ENCODE measurements at regions of chr22 and their contacts with region 1.

Region 1: DNA sequence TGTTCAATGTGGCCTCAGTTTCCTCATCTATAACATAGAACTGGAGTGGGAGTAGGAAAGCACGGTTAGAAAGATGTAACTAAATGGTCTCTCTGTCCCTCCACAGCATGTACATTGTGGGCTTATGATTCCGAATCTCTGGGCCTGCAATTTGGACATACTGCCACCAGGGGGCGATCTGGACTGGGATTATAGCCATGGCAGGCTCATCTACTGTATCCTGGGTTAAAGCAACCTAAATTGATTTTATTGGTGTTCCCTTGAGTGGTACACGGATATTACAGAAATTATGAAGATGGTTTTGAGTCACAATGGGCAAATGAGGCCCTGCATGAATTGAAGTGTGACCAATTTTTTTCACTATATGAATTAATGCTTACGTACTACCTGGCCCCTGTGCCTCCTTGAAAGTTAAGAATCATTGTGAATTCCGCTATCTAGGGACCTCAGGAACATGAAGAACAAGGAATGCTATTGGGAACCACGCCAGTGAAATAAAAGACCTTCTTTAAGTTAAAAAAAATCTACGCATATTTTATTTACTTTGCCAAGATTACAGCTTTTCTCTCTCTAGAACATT is 32.9 kb downstream of the TST start:
- DNase-seq: peak; percentile 82
- ATAC-seq: peak; percentile 55
- H3K4me3 Mint-ChIP-seq: no peak overlapping the region
- H3K27ac Mint-ChIP-seq: no peak overlapping the region
- H3K4me1 Mint-ChIP-seq: no peaks in the 10 kb centered on the region
- H3K27me3 Mint-ChIP-seq: peaks cover 21% of the 10 kb centered on the region
- CTCF ChIP-seq: peak; percentile 94

Region 2: DNA sequence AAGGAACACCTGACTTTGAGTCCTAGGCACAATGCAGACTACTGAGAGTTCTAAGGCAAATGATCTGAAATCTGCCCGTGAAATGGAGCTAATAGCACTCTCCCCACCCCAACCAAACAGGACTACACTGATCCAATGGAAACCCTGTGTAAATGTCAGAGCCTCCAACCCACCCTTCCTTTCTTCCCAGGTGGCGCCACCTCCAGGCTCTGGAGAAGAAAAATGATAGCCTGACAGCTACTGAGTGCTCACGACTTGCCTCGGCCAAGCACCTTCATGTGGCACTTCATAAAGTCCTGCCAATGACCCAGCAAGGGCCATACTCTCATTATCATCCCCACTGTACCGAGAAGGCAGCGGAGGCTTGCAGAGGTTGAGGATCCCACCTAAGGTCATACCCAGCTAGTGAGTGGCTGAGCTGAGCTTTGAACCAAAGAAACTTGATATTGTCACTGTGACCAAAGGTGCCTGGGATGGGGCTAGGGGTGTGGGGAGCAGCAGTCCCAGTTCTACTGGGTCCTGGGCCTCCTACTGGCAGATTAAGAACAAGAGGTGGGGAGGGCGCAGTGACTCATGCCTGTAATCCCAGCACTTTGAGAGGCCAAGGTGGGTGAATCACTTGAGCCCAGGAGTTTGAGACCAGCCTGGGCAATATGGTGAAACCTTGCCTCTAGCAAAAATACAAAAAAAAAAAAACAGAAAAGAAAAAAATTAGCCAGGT is 12.4 kb after region 1 on chr22:
- CTCF ChIA-PET with region 1: interaction called, 11 read pairs
- POLR2A ChIA-PET with region 1: no interaction called
- intact Hi-C with region 1: no loop called
- DNase-seq: peak; percentile 19
- ATAC-seq: no peak
- H3K4me3 Mint-ChIP-seq: no peak overlapping the region
- H3K27ac Mint-ChIP-seq: no peak overlapping the region
- H3K4me1 Mint-ChIP-seq: no peaks in the 10 kb centered on the region
- H3K27me3 Mint-ChIP-seq: peaks cover 6% of the 10 kb centered on the region
- CTCF ChIP-seq: no peak

Region 3: GRCh38 chr22:37098976-37099591 is 112.8 kb after region 1 on chr22:
- CTCF ChIA-PET with region 1: no interaction called
- POLR2A ChIA-PET with region 1: no interaction called
- intact Hi-C with region 1: no loop called
- DNase-seq: peak; percentile 17
- ATAC-seq: no peak
- H3K4me3 Mint-ChIP-seq: no peak overlapping the region
- H3K27ac Mint-ChIP-seq: peak overlapping the region; percentile 68
- H3K4me1 Mint-ChIP-seq: peaks cover 49% of the 10 kb centered on the region
- H3K27me3 Mint-ChIP-seq: peaks cover 9% of the 10 kb centered on the region
- CTCF ChIP-seq: peak; percentile 36

Measured in activated CD8-positive, alpha-beta T cell treated with anti-CD3 and anti-CD28 coated beads for 36 hours (primary cell).